Activated CD4-positive, alpha-beta T cell treated with anti-CD3 and anti-CD28 coated beads, Interleukin-2, amount 10 ng/mL, durations not matched to agents 24 days and 14 days (primary cell): ENCODE measurements at regions of chr9 and their contacts with region 1.

Region 1: GRCh38 chr9:20209391-20210340 is 412.6 kb downstream of the MLLT3 start:
- DNase-seq: peak; percentile 89
- H3K4me3 Mint-ChIP-seq: peak overlapping the region; percentile 57
- H3K27ac Mint-ChIP-seq: peak overlapping the region; percentile 95
- H3K4me1 Mint-ChIP-seq: peaks cover 36% of the 10 kb centered on the region
- H3K27me3 Mint-ChIP-seq: no peaks in the 10 kb centered on the region

Region 2: GRCh38 chr9:19976226-19976625 is 233.4 kb before region 1 on chr9:
- intact Hi-C with region 1: loop called (anchors 1 kb)
- DNase-seq: peak; percentile 81
- H3K4me3 Mint-ChIP-seq: peak overlapping the region; percentile 1
- H3K27ac Mint-ChIP-seq: peak overlapping the region; percentile 94
- H3K4me1 Mint-ChIP-seq: peaks cover 33% of the 10 kb centered on the region
- H3K27me3 Mint-ChIP-seq: no peaks in the 10 kb centered on the region

Region 3: GRCh38 chr9:20043035-20043434 is 166.6 kb before region 1 on chr9:
- intact Hi-C with region 1: loop called (anchors 1 kb)
- DNase-seq: peak; percentile 68
- H3K4me3 Mint-ChIP-seq: peak overlapping the region; percentile 61
- H3K27ac Mint-ChIP-seq: peak overlapping the region; percentile 65
- H3K4me1 Mint-ChIP-seq: peaks cover 35% of the 10 kb centered on the region
- H3K27me3 Mint-ChIP-seq: no peaks in the 10 kb centered on the region

Region 4: GRCh38 chr9:20319641-20320337 is 110.1 kb after region 1 on chr9:
- intact Hi-C with region 1: loop called (anchors 1 kb)
- DNase-seq: peak; percentile 80
- H3K4me3 Mint-ChIP-seq: peak overlapping the region; percentile 60
- H3K27ac Mint-ChIP-seq: peak overlapping the region; percentile 94
- H3K4me1 Mint-ChIP-seq: peaks cover 78% of the 10 kb centered on the region
- H3K27me3 Mint-ChIP-seq: no peaks in the 10 kb centered on the region

Region 5: DNA sequence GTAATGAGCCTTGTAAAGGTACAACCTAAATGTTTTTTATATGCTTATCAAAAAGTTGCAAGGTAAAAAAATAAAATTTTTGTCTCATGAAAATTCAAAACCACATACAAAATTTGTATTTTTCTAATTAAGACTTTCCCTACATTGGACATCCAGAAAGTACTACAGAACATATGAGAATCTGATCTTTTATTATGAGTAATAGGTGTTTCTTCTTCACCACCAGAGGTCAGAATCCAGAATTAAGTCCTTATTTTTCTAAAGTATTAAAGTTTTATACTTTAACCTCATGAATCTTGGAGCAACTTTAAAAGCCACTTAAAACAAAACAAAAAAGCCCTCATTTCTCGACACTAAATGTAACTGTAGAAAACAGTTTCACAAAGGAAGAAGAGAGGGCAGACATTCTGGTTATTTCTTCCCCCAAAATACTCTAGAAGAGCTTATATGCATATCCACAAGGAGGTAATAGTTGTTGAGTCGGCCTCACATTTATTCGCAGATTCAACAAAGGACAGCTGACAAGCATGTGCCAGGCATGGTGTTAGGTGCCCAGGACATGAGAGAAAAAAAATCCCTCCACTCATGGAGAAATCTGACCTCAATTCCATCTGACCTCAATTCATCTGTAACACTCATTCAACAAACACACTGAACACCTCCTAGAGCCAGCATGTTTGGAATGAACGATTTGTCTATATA is 343.4 kb after region 1 on chr9:
- intact Hi-C with region 1: loop called (anchors 2 kb)
- DNase-seq: peak; percentile 69
- H3K4me3 Mint-ChIP-seq: peak overlapping the region; percentile 57
- H3K27ac Mint-ChIP-seq: peak overlapping the region; percentile 82
- H3K4me1 Mint-ChIP-seq: peaks cover 67% of the 10 kb centered on the region
- H3K27me3 Mint-ChIP-seq: no peaks in the 10 kb centered on the region

Region 6: DNA sequence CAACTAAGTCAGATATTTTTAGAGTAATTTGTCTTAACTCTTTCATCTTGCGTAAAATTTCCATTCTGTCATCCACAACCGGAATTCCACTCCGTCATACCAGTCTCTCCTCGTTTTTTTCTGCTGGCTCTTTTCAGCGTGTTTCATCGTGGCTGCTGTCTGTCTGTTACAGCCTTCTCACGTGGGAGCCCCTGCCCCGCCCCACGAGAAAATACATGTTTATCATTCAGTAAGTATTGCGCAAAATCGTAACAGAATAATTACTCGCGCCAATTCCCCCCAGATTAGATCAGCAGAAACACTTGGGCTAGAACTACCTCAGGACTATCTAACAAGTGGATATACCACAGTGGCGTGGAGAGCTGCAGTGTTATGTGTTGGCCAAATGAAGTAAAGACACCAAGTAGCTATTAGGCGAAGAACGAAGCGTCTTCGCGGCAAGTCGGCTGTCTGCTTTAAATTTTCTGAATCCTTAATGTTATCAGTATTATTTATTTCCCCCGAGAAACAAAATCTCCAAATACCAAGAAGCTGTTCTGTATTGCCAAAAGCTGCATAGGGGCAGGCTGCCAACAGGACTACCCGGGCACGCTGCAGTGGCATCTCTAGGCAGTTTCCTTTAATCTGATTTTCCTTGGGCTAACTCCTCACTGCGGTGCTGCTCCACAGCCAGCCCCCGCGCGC is 473.8 kb after region 1 on chr9:
- intact Hi-C with region 1: loop called (anchors 1 kb)
- DNase-seq: peak; percentile 80
- H3K4me3 Mint-ChIP-seq: peak overlapping the region; percentile 90
- H3K27ac Mint-ChIP-seq: peak overlapping the region; percentile 92
- H3K4me1 Mint-ChIP-seq: peaks cover 20% of the 10 kb centered on the region
- H3K27me3 Mint-ChIP-seq: no peaks in the 10 kb centered on the region